Activated B cell treated with CpG ODN at 0.5 μM for 24 hours (primary cell): ENCODE measurements at regions of chr9 and their contacts with region 1.

Region 1: DNA sequence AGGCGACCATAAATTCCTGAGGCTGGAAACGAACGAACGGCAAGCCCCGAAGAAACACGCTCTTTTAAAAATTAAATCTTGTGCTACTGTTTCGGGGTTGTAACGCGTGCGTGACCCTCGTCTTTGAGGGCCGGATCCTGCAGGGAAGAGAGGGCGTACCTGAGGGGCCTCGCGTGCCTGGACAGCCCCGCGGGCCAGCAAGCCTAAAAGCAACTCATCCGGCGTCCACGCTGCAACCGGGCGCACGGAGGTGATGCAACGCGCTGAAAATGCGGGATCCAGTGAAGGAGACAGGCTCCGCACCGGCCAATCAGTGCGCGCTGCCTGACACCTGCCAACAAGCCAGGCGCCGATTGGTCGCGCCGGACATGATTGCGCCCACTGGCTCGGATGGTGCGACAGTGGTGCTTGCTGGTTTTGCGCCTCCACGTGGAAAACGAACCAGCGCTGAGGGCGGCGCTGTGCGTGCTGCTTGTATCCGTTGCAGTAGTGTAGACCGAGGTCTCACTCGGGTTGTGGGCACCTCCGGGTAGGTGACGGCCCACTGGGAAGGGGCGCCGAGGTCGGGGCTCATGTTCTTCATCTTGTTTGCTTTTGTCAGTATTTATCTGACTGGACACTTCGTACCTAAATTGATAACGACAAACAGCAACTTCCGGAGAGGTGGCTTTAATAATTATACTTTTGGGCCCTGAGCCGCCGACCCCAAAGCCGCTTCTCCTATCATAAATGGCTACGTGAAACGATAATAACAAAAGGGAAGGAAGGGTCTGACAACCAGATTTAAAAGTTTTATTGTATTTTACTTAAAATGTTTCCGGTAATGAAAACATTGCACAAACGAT is at the start of gene IARS1:
- DNase-seq: peak; percentile 100
- ATAC-seq: peak; percentile 90
- H3K4me3 Mint-ChIP-seq: peak within 1 kb of the TSS; percentile 98
- H3K27ac Mint-ChIP-seq: peak within 1 kb of the TSS; percentile 98
- H3K4me1 Mint-ChIP-seq: peaks cover 76% of the 10 kb centered on the region
- H3K27me3 Mint-ChIP-seq: no peaks in the 10 kb centered on the region
- CTCF ChIP-seq: no peak
- total RNA-seq, gene IARS1: 176 and 205 TPM in 2 replicates

Region 2: DNA sequence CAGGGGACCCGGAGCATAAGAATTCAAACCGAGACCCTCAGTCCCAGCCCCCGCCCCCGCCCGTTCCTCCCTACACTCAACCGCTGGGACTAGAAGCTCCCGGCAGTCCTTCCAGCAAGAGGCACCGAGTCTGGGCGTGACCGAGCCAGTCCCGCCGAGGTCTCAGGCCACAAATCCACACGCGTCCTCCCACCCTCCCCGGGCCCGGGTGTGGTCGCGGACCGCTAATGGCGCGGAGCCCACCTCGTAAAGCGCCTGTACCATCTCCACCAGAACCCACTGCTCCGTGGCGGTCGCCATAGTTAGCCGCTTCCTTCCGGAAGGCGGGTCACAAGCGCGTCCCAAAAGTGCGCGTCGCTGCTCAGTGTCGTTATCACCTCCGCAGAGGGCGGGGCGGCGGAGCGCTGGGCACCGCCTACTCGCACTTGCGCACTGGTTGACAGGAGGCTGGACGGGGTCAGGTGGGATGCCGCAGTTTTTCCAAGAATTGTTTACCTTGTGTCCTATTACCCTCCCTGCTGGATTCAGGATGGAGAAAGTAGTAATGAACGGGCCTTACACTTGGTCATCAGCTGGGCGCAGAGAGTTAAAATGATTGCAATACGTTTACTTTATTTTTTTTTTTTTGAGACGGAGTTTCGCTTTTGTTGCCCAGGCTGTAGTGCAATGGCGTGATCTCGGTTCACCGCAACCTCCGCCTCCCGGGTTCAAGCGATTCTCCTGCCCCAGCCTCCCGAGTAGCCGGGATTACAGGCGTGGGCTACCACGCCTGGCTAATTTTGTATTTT is 178.4 kb before region 1 on chr9 and contains the start of gene SPTLC1:
- CTCF ChIA-PET with region 1: no interaction called
- POLR2A ChIA-PET with region 1: interaction called, 5 read pairs
- intact Hi-C with region 1: loop called (anchors 1 kb)
- DNase-seq: peak; percentile 93
- ATAC-seq: peak; percentile 98
- H3K4me3 Mint-ChIP-seq: peak within 1 kb of the TSS; percentile 100
- H3K27ac Mint-ChIP-seq: peak within 1 kb of the TSS; percentile 99
- H3K4me1 Mint-ChIP-seq: peaks cover 24% of the 10 kb centered on the region
- H3K27me3 Mint-ChIP-seq: no peaks in the 10 kb centered on the region
- CTCF ChIP-seq: no peak
- total RNA-seq, gene SPTLC1: 40.8 and 41.0 TPM in 2 replicates